Dendritic cell treated with granulocyte-macrophage colony-stimulating factor and Interleukin-4, amounts not matched to agents 40 ng/mL and 50 ng/mL, for 4 days (primary cell): ENCODE measurements at regions of chr6 and their contacts with region 1.

Region 1: GRCh38 chr6:135145063-135145800 is 35.9 kb upstream of the MYB start:
- H3K4me3 Mint-ChIP-seq: peak overlapping the region; percentile 24
- H3K27ac Mint-ChIP-seq: no peak overlapping the region
- H3K4me1 Mint-ChIP-seq: peaks cover 43% of the 10 kb centered on the region
- H3K27me3 Mint-ChIP-seq: peaks cover 7% of the 10 kb centered on the region

Region 2: DNA sequence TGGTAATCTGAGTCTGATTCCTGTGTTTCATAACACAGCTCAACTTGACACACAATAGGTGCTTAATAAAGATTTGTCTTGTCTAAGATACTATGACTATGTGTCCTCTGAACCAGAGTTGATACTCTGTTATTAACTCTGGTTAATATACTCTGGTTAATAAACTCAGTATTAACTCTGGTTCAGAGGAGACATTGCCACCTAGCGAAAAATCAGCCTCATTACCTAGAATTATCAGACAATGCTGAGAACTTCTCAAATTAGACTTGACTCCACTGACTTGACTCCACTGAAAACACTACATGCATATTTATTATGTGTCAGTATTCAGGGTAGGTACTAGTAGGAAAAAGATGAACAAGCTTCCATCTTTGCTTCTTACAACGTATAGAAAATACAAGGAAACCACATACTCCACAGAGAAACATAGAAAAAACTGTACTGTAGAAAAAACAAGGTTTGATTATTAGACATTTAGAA is 278.5 kb after region 1 on chr6:
- intact Hi-C with region 1: loop called (anchors 1 kb)
- H3K4me3 Mint-ChIP-seq: no peak overlapping the region
- H3K27ac Mint-ChIP-seq: no peak overlapping the region
- H3K4me1 Mint-ChIP-seq: no peaks in the 10 kb centered on the region
- H3K27me3 Mint-ChIP-seq: no peaks in the 10 kb centered on the region

Region 3: DNA sequence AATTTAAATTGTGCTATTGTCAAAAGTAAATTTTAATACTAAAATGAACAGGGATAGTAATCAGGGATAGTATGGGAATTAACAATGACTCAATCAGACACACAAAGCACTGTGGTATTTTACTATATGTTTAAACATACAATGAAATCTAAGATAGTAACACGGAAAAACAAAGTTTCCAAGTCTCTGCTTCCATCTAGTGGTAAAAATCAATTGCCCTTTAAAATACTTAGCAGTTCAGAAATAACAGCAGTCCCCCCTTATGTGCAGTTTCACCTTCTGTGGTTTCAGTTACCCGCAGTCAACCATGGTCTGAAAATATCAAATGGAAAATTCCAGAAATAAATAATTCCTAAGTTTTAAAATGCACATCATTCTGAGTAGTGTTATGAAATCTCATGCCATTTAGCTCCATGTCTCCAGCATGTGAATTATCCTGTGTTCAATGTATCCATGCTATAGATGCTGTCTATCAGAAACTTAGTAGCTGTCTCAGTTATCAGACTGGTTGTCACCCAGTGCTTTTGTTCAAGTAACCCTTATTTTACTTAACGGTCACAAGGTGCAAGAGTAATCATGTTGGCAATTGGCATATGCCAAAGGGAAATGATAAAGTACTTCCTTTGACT is 293.8 kb after region 1 on chr6:
- intact Hi-C with region 1: loop called (anchors 5 kb)
- H3K4me3 Mint-ChIP-seq: no peak overlapping the region
- H3K27ac Mint-ChIP-seq: no peak overlapping the region
- H3K4me1 Mint-ChIP-seq: peaks cover 13% of the 10 kb centered on the region
- H3K27me3 Mint-ChIP-seq: no peaks in the 10 kb centered on the region